ENCODE measurements at regions of chrX and their contacts with region 1.

Region 1: GRCh38 chrX:13087322-13088155 is 43.1 kb upstream of the FAM9C start:
- DNase-seq: peak; percentile 61
- CTCF ChIP-seq: no peak

Region 2: GRCh38 chrX:12974796-12975669 is 112.5 kb before region 1 on chrX and contains the start of gene TMSB4X:
- CTCF ChIA-PET with region 1: interaction called, 6 read pairs
- POLR2A ChIA-PET with region 1: interaction called, 19 read pairs
- DNase-seq: peak; percentile 63
- CTCF ChIP-seq: no peak

Region 3: DNA sequence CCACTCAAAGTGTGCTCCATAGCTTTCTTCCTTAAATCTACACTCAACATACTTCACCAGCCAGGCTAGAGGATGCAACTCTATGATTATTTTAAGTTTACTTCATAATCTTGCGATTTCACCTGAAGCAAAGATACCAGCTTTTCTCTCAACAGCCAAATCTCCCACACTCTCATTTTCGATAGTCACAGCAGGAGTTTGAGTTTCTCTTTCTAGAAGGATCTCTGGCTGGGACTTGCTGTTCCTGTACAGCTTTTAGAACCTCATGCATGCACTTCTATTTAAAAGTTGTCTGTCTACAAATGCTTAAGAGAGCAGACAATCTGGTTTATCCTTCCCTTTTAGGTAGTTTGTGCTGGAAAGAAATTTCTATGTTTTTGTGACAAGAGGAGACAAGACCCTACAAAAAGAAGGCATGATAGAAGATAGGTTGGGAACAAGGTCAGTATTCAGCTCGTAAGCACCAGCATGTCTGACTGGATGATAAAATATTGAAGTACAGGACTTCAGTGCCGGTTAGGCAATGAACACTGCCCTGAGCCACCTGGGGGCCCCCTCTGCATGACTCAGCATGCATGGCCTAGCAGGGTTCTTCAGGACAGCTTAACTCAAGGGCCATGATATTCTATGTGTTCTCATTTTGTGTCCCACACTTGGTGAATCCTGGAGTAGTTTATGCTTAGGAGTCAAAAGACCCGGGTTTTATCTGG is 166.7 kb after region 1 on chrX:
- CTCF ChIA-PET with region 1: interaction called, 10 read pairs
- POLR2A ChIA-PET with region 1: no interaction called
- DNase-seq: peak; percentile 14
- CTCF ChIP-seq: peak; percentile 28